Activated naive CD4-positive, alpha-beta T cell treated with anti-CD3 and anti-CD28 coated beads for 36 hours (primary cell): ENCODE measurements at regions of chr1 and their contacts with region 1.

Region 1: DNA sequence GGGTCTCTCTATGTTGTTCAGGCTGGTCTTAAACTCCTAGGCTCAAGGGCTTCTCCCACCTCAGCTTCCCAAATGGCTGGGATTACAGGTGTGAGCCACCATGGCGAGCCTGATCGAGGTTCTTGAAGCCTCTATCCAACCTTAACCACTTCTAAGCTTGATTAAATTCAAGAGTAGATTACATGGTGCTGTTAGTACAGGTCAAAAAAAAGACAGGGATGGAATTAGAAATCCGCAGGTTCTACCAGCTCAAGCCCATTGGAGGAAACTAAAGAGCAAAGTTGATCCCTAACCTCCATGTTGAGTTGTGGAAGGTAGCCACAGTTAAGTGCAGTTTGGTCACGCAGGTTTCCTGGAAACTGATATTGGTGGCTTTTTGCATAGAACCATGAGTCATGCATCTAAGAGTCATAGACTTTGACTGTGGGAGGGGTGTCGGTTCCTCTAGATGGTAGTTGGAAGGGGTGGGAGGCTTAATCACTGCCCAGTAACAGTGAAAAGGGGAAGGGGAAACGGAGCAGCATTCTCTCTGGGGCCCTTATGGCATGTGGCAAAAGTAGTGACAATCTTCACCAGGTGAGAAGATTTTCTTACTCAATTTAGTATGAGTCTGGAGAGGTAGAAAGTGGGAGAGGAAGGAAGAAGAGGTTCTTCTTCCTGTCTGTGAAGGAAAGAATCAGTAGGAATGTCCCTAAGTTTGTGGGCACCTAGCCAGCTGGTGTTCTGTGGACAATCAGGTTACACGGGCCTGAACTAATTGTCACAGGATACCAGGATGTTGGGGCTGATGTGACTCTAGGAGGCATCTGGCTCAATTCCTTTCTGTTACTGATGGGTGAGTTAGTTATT is 7.0 kb downstream of the CD53 start:
- DNase-seq: peak; percentile 88
- H3K4me3 Mint-ChIP-seq: peak overlapping the region; percentile 58
- H3K27ac Mint-ChIP-seq: peak overlapping the region; percentile 99
- H3K4me1 Mint-ChIP-seq: peaks cover 69% of the 10 kb centered on the region
- H3K27me3 Mint-ChIP-seq: no peaks in the 10 kb centered on the region

Region 2: DNA sequence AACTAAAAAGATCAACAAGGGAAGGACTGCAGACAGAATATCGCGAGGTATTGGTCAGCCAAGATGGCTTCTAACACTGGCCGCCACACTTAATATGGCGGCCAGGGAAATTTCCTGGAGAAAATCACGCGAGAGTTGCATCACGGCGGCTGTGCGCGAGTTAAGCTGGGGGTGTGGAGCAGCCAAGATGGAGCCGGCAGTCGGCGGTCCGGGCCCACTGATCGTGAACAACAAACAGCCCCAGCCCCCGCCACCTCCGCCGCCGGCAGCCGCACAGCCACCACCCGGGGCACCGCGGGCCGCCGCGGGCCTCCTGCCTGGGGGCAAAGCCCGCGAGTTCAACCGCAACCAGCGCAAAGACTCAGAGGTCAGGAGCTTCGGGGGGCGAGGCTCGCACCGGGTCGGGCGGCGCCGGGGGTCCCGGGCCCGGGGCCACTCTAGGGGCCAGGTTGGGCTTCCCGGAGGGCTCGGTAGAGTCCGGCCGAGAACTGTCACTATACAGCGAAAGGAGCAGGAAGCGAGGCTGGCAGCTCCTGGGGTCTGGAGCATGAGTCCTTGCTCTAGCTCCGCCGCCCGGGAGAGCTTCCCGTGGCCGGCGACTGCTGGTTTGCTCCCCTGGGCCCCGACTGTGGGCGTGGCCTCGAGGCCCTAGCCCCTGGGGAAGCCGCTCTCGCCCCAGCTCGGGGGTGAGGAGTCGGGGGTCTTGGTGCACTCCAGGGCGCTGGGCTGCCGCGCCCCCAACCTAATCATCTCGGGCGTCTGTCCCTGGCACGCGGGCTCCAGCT is 845.3 kb before region 1 on chr1 and contains the start of gene STRIP1:
- CTCF ChIA-PET with region 1: no interaction called
- intact Hi-C with region 1: loop called (anchors 5 kb)
- DNase-seq: peak; percentile 96
- H3K4me3 Mint-ChIP-seq: peak within 1 kb of the TSS; percentile 91
- H3K27ac Mint-ChIP-seq: peak within 1 kb of the TSS; percentile 79
- H3K4me1 Mint-ChIP-seq: peaks cover 51% of the 10 kb centered on the region
- H3K27me3 Mint-ChIP-seq: no peaks in the 10 kb centered on the region
- total RNA-seq, gene STRIP1: 20.7 to 22.8 TPM

Region 3: DNA sequence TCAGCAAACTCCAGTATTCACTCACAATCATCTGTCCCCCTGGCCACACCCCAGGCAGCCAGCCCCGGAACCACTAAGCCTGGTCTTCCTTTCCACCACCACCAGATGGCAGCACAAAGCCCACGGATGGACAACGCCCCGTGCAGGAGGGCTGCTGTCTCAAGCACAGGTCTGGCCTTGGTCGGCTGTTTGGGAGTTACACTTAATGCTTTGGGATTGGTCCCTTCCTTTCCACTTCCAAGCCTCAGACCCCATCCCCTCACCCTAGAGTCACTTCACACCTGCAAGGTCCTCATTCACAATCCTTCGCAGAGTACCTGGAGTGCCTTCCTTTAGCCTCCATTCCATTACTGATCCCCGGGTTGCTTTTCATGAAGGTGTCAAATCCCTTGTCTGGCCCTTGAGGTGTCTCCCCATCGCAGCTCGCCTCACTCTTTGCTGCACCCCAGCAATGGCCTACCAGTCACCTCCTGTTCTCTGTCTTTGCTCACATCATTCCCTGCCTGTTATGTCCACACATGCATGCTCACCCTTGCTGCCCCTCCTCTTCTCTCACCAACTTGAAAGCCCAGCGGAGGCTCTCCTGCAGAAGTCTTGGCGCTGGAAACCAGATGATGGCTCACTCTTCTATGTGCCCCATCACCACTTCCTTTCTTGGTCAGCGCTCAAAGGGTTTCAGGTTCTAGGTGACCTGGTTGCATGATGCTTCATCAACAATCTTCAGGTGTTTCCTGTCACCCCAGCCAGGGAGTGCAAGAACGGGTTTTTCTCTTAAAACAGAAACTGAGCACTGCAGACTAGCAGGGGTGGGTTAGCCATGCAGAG is 248.9 kb before region 1 on chr1:
- CTCF ChIA-PET with region 1: no interaction called
- intact Hi-C with region 1: loop called (anchors 1 kb)
- DNase-seq: peak; percentile 92
- H3K4me3 Mint-ChIP-seq: no peak overlapping the region
- H3K27ac Mint-ChIP-seq: no peak overlapping the region
- H3K4me1 Mint-ChIP-seq: peaks cover 54% of the 10 kb centered on the region
- H3K27me3 Mint-ChIP-seq: no peaks in the 10 kb centered on the region

Region 4: DNA sequence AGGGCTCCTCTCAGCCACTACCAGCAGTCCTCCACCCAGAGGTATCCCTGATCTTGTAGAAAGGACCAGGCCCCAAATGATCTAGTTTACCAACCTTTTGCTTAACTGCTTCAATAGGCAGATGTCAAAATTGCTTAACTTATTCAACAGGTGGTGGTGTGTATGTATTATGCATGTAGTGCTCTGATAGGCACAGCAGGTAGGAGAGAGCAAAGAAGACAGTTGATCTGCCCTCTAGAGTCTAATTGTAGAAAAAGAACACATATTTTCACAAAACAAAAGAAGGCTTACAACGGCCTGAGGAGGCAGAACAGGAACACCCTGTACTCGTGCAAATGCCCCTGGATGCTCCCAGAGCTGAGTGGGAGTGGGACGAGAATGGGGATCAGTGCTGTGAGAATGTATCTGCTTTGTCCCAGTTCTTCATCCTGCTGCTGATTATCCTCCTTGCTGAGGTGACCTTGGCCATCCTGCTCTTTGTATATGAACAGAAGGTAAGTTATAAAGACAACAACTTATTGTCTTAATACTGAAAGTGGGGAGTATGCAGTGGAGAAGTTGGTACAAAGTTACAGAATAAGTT is 14.0 kb after region 1 on chr1:
- CTCF ChIA-PET with region 1: interaction called, 4 read pairs
- intact Hi-C with region 1: loop called (anchors 1 kb)
- DNase-seq: no peak
- H3K4me3 Mint-ChIP-seq: no peak overlapping the region
- H3K27ac Mint-ChIP-seq: peak overlapping the region; percentile 74
- H3K4me1 Mint-ChIP-seq: peaks cover 89% of the 10 kb centered on the region
- H3K27me3 Mint-ChIP-seq: no peaks in the 10 kb centered on the region

Region 5: DNA sequence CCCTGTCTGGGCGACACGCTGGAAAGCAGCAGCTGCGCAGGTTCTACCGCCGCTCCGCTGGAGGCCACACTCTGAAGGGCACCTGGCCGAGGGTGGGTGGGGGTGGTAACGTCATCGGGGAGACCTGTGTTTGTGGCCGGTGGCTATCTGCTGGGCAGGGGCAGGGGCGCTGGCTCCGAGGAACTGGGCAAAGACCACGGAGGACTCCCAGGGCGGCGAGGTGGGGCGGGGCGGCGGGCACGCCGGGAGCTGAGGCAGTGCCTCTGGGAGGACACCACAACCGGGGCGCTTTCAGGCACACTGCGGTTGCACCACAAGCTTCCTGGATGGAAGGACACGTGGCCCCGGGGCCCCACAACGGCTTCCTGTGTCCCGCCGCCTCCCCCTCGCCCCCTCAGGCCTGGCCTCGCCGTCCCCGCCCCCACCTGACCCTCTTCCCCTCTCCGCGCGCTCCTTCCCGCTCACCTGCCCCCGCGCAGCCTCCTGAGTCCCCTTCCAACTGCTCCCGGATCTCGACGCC is 323.8 kb after region 1 on chr1:
- CTCF ChIA-PET with region 1: no interaction called
- intact Hi-C with region 1: loop called (anchors 5 kb)
- DNase-seq: peak; percentile 94
- H3K4me3 Mint-ChIP-seq: peak overlapping the region; percentile 98
- H3K27ac Mint-ChIP-seq: peak overlapping the region; percentile 99
- H3K4me1 Mint-ChIP-seq: peaks cover 44% of the 10 kb centered on the region
- H3K27me3 Mint-ChIP-seq: no peaks in the 10 kb centered on the region

Region 6: GRCh38 chr1:111448918-111449702 is 569.1 kb after region 1 on chr1 and contains the starts of genes ATP5PB and WDR77:
- CTCF ChIA-PET with region 1: no interaction called
- intact Hi-C with region 1: loop called (anchors 5 kb)
- DNase-seq: peak; percentile 96
- H3K4me3 Mint-ChIP-seq: peak within 1 kb of the TSS; percentile 100
- H3K27ac Mint-ChIP-seq: peak within 1 kb of the TSS; percentile 96
- H3K4me1 Mint-ChIP-seq: peaks cover 71% of the 10 kb centered on the region
- H3K27me3 Mint-ChIP-seq: no peaks in the 10 kb centered on the region
- total RNA-seq, gene ATP5PB: 324 to 331 TPM
- total RNA-seq, gene WDR77: 43.1 to 48.8 TPM

Region 7: GRCh38 chr1:112619520-112620376 is 1739.8 kb after region 1 on chr1 and contains the start of gene CAPZA1:
- CTCF ChIA-PET with region 1: no interaction called
- intact Hi-C with region 1: loop called (anchors 5 kb)
- DNase-seq: peak; percentile 95
- H3K4me3 Mint-ChIP-seq: peak within 1 kb of the TSS; percentile 99
- H3K27ac Mint-ChIP-seq: peak within 1 kb of the TSS; percentile 100
- H3K4me1 Mint-ChIP-seq: peaks cover 48% of the 10 kb centered on the region
- H3K27me3 Mint-ChIP-seq: no peaks in the 10 kb centered on the region
- total RNA-seq, gene CAPZA1: 231 to 242 TPM